Colonic mucosa (tissue), 4 donors: ENCODE measurements at regions of chr3 and their contacts with region 1.

Region 1: DNA sequence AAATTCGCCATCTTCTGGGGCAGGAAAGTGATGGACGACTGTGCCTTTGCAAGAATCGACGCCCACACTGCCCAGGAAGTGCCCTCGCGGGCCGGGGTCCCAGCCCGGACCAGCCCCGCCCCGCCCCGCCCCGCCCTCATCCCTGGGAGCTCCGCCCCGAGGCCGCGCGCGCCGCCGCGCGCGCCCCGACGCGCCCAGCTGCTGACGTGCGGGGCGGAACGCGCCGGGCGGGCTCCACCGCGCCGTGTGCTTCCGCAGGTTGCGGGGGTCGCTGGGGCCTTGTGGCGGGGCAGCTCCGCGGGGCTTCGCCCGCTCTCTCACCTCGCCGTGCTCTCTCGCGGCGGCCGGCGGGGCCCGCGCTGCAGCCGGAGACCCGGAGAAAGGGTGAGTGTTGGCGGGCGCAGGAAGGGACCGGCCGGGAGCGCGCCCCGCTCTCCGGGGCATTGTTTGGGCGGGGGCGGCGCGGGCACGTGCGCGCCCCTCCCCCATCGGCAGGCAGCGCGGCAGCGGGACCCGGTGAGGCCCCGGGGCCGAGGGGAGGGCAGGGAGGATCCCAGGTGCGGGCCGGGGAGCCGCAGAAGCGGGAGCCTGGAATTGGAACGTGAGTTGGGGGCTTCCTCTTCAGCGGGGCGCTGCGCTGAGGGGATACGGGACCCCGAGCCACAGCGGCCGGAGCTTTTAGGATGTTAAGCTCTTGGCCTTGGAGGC is at the start of gene YEATS2:
- DNase-seq: peak; percentile 67
- H3K4me3 ChIP-seq: peak within 1 kb of the TSS; percentile 97
- H3K27ac ChIP-seq: peak within 1 kb of the TSS; percentile 76
- H3K4me1 ChIP-seq: no peaks in the 10 kb centered on the region
- H3K27me3 ChIP-seq: no peaks in the 10 kb centered on the region
- CTCF ChIP-seq: no peak
- total RNA-seq, gene YEATS2: 17.3 to 25.2 TPM

Region 2: GRCh38 chr3:183641882-183642281 is 55.9 kb before region 1 on chr3:
- intact Hi-C with region 1: loop called (anchors 10 kb)
- DNase-seq: no peak
- H3K4me3 ChIP-seq: no peak overlapping the region
- H3K27ac ChIP-seq: no peak overlapping the region
- H3K4me1 ChIP-seq: peaks cover 3% of the 10 kb centered on the region
- H3K27me3 ChIP-seq: no peaks in the 10 kb centered on the region
- CTCF ChIP-seq: no peak

Region 3: DNA sequence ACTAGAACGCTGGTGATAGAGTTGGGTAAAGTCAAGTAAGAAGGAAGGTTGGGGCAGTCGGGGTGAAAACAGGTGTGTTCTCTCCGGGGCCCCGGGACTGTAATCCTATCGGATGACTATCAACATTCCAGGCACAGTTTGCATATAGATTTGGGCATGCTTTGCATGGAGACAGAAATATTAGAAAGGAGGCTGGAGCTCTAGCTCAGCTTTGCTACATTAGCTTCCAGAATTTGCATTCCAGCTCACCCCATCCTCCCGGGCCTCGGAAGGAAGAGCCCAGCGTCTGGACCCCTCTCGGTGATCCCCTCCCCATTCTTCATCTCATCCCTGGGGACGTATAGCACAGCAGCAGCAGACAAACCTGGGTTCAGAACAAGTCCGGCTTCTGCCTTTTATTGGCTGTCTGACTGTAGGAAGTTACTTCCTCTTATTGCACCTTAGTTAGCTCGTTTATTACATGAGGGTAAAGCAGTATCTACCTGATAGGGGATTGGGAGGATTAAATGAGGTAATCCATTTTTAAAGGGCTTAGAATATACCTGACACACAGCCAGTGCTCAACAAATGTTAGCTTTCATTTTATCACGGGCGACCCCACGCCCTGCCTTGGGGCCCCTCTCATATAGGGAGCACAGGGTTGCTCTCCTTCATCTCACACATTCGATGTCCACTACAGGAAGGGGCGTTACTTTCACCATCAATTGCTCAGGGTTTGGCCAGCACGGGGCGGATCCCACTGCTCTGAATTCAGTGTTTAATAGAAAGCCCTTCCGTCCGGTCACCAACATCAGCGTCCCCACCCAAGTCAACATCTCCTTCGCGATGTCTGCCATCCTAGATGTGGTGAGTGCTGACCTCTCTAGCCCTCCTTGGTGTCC is 402.3 kb after region 1 on chr3:
- intact Hi-C with region 1: no loop called
- DNase-seq: no peak
- H3K4me3 ChIP-seq: no peak overlapping the region
- H3K27ac ChIP-seq: no peak overlapping the region
- H3K4me1 ChIP-seq: no peaks in the 10 kb centered on the region
- H3K27me3 ChIP-seq: no peaks in the 10 kb centered on the region
- CTCF ChIP-seq: no peak